CD4-positive, alpha-beta T cell (primary cell): ENCODE measurements at regions of chr11 and their contacts with region 1.

Region 1: DNA sequence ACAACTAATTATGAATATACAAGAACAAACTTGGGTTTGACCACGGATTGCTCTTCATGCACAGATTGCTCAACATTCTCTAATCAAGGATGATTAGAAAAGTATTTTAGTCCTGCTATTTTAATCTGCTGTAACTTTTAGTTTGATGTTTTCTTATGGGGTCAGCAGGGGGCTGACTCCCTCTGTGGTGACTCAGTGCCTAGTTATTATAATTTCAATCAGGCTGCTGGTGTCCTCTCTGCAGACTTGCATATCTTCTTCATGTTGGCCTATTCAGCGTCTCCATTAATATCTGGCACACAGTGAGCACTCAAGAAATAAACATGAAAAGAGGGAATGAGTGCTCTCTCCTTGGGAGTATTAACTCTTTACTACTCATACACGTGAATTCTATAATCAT is 223.8 kb upstream of the DDI1 start:
- DNase-seq: no peak
- ATAC-seq: no peak
- H3K4me3 ChIP-seq: no peak overlapping the region
- H3K4me3 Mint-ChIP-seq: no peak overlapping the region
- H3K27ac ChIP-seq: no peak overlapping the region
- H3K27ac Mint-ChIP-seq: no peak overlapping the region
- H3K4me1 ChIP-seq: no peaks in the 10 kb centered on the region
- H3K4me1 Mint-ChIP-seq: no peaks in the 10 kb centered on the region
- H3K27me3 ChIP-seq: no peaks in the 10 kb centered on the region
- H3K27me3 Mint-ChIP-seq: no peaks in the 10 kb centered on the region
- CTCF ChIP-seq: no peak

Region 2: DNA sequence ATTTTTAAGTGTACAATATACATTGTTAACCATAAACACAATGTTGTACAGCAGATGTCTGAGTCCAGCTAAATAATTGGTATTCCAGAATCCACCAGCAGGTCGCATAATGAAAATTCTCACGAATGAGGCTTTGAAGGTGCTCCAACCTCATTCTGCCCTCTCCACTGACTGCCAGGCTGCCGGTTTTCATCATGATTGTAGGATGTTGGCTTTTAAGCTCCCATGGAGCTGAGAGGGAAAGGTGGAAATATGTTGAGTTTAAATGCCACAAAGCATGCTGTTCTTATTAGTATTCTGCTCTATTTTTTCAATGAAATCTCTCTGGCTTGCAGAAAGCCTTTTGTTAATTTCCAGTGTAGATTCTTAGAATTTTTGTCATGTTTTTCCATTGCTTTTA is 113.5 kb before region 1 on chr11:
- CTCF ChIA-PET with region 1: no interaction called
- POLR2A ChIA-PET with region 1: no interaction called
- intact Hi-C with region 1: loop called in 1 of 2 experiments (anchors 10 kb)
- DNase-seq: no peak
- ATAC-seq: no peak
- H3K4me3 ChIP-seq: no peak overlapping the region
- H3K4me3 Mint-ChIP-seq: no peak overlapping the region
- H3K27ac ChIP-seq: no peak overlapping the region
- H3K27ac Mint-ChIP-seq: no peak overlapping the region
- H3K4me1 ChIP-seq: no peaks in the 10 kb centered on the region
- H3K4me1 Mint-ChIP-seq: no peaks in the 10 kb centered on the region
- H3K27me3 ChIP-seq: no peaks in the 10 kb centered on the region
- H3K27me3 Mint-ChIP-seq: no peaks in the 10 kb centered on the region
- CTCF ChIP-seq: no peak

Region 3: GRCh38 chr11:103730131-103730940 is 82.3 kb before region 1 on chr11:
- CTCF ChIA-PET with region 1: no interaction called
- POLR2A ChIA-PET with region 1: no interaction called
- intact Hi-C with region 1: no loop called
- DNase-seq: no peak
- ATAC-seq: no peak
- H3K4me3 ChIP-seq: no peak overlapping the region
- H3K4me3 Mint-ChIP-seq: no peak overlapping the region
- H3K27ac ChIP-seq: no peak overlapping the region
- H3K27ac Mint-ChIP-seq: no peak overlapping the region
- H3K4me1 ChIP-seq: no peaks in the 10 kb centered on the region
- H3K4me1 Mint-ChIP-seq: no peaks in the 10 kb centered on the region
- H3K27me3 ChIP-seq: no peaks in the 10 kb centered on the region
- H3K27me3 Mint-ChIP-seq: no peaks in the 10 kb centered on the region
- CTCF ChIP-seq: no peak